ENCODE measurements at regions of chr1 and their contacts with region 1.

Region 1: DNA sequence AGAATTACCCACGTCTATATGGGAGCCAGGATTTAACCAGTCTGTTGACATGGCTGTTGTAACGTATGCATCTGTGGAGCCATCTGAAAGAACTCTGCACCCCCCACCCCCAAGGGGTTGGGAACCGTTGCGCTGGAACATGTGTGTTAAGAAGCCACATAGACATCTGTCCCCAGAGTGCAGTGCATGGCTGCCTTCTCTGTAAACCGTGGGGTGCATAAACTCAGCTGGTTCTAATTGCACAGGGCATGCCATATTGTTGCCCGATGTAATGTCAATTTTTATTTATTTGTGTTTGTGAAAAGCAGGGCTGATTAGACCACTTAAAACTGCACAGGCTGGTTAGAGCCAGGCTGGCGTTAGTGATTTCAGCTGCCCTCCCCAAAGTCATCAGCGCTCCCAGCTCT is 70.1 kb upstream of the ROR1 start:
- DNase-seq: no peak
- H3K4me3 ChIP-seq: no peak overlapping the region
- H3K27ac ChIP-seq: no peak overlapping the region
- H3K4me1 ChIP-seq: peaks cover 37% of the 10 kb centered on the region
- H3K27me3 ChIP-seq: no peaks in the 10 kb centered on the region
- CTCF ChIP-seq: no peak

Region 2: GRCh38 chr1:63718541-63718970 is 14.9 kb after region 1 on chr1:
- CTCF ChIA-PET with region 1: interaction called, 10 read pairs
- POLR2A ChIA-PET with region 1: no interaction called
- intact Hi-C with region 1: no loop called
- DNase-seq: no peak
- H3K4me3 ChIP-seq: no peak overlapping the region
- H3K27ac ChIP-seq: no peak overlapping the region
- H3K4me1 ChIP-seq: peaks cover 17% of the 10 kb centered on the region
- H3K27me3 ChIP-seq: no peaks in the 10 kb centered on the region
- CTCF ChIP-seq: no peak

Measured in PC-9 (cell line).